ENCODE measurements at regions of chr19 and their contacts with region 1.

Region 1: DNA sequence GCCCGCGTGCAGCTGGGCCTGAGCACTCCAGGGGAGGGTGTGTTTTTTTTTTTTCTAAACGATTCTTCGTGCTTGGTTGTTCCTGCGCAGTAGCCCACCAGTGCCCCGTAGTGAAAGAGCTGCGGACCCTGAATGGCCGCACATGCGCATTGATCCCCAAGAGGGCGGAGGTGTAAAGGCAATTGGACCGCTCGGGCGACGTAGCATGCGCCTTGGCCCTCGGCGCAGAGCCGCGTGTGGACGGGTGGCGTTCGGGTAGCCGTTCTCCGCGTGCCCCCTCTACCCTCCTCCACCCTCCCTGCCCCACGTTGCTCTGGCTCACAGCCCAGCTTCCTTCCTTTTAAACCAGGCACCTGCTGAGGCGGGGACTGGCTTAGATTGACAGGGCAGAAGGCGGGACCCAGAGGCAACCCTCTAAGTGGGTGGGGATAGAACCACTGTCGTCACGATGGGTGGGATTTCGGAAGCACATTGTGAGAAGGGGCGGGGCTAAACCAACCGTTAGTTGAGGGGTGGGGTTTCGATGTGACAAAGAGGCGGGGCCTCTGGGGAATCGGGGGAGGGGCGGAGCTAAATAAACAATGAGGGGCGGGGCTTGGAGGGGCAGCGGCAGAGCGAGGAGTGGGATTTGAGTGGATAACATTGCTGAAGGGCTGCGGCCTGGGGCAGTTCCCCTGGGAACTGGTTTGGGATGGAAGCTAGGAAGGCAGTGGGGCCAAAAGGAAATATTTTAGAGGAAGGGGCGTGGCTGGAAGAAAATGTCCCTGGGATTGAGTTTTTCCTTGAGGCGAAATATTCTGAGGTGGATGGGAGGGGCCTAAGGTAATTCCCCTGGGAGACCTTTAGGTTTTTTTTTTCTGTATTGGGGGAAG is 543 bp upstream of the NUP62 start:
- DNase-seq: peak; percentile 83 to 84
- H3K4me3 ChIP-seq: peak overlapping the region; percentile 93 to 97 (median 94)
- H3K27ac ChIP-seq: peak overlapping the region; percentile 89 to 97
- H3K4me1 ChIP-seq: peaks cover 4 to 11% of the 10 kb centered on the region in 2 donors
- H3K27me3 ChIP-seq: no peaks in the 10 kb centered on the region
- CTCF ChIP-seq: peak; percentile 10 to 33 (median 32)
- POLR2A ChIP-seq: no peak

Region 2: DNA sequence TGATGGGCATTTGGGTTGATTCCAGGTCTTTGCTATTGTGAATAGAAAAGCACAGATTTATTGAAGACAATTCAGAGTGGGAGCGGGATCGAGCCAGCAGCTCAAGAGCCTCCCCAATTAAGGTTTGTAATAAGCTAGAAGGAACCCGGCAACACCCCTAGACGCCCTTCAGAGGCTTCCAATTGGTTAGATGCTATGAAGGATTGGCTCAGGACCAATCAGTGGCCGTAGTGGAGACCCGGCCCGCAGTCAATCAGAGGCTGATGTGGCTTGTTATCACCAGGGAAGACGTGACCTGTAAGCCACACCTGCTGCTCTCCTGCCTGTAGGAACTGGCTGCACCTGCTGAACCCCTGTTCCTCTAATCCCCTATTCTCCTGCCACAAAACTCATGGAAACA is 16.6 kb after region 1 on chr19:
- intact Hi-C with region 1: loop called (anchors 1 kb)
- DNase-seq: peak in 1 of 2 donors; percentile 24
- H3K4me3 ChIP-seq: no peak overlapping the region
- H3K27ac ChIP-seq: no peak overlapping the region
- H3K4me1 ChIP-seq: no peaks in the 10 kb centered on the region
- H3K27me3 ChIP-seq: no peaks in the 10 kb centered on the region
- CTCF ChIP-seq: no peak
- POLR2A ChIP-seq: no peak

Region 3: GRCh38 chr19:50003810-50004419 is 74.1 kb after region 1 on chr19:
- intact Hi-C with region 1: no loop called
- DNase-seq: peak in 1 of 2 donors; percentile 19
- H3K4me3 ChIP-seq: no peak overlapping the region
- H3K27ac ChIP-seq: peak overlapping the region; percentile 46 to 52
- H3K4me1 ChIP-seq: no peaks in the 10 kb centered on the region
- H3K27me3 ChIP-seq: no peaks in the 10 kb centered on the region
- CTCF ChIP-seq: no peak
- POLR2A ChIP-seq: no peak